ENCODE measurements at regions of chr12 and their contacts with region 1.

Region 1: GRCh38 chr12:13165617-13166041 is 30.9 kb upstream of the EMP1 start:
- DNase-seq: peak; percentile 92
- H3K4me3 Mint-ChIP-seq: no peak overlapping the region
- H3K27ac Mint-ChIP-seq: peak overlapping the region; percentile 52
- H3K4me1 Mint-ChIP-seq: peaks cover 25% of the 10 kb centered on the region
- H3K27me3 Mint-ChIP-seq: peaks cover 5% of the 10 kb centered on the region

Region 2: DNA sequence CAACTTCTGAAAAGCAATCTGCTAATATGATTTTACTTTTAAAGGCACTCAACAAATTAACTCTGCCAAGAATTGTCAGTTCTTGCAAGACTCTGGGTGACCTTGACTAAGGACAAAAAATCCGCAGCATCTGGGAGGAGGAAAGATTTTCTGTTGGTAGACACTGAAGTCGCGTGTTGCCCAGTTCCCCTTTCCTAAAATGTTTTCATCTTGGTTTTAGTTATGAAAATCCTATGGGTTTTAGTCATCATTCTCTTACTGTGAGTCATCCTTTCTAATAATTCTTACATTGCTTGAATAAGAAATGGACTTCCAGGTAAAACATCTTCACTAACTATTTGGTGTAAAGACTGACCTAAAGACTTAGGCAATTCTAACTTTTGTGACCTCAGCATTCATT is 71.3 kb before region 1 on chr12:
- CTCF ChIA-PET with region 1: no interaction called
- POLR2A ChIA-PET with region 1: no interaction called
- intact Hi-C with region 1: no loop called
- DNase-seq: no peak
- H3K4me3 Mint-ChIP-seq: no peak overlapping the region
- H3K27ac Mint-ChIP-seq: no peak overlapping the region
- H3K4me1 Mint-ChIP-seq: peaks cover 30% of the 10 kb centered on the region
- H3K27me3 Mint-ChIP-seq: no peaks in the 10 kb centered on the region

Region 3: DNA sequence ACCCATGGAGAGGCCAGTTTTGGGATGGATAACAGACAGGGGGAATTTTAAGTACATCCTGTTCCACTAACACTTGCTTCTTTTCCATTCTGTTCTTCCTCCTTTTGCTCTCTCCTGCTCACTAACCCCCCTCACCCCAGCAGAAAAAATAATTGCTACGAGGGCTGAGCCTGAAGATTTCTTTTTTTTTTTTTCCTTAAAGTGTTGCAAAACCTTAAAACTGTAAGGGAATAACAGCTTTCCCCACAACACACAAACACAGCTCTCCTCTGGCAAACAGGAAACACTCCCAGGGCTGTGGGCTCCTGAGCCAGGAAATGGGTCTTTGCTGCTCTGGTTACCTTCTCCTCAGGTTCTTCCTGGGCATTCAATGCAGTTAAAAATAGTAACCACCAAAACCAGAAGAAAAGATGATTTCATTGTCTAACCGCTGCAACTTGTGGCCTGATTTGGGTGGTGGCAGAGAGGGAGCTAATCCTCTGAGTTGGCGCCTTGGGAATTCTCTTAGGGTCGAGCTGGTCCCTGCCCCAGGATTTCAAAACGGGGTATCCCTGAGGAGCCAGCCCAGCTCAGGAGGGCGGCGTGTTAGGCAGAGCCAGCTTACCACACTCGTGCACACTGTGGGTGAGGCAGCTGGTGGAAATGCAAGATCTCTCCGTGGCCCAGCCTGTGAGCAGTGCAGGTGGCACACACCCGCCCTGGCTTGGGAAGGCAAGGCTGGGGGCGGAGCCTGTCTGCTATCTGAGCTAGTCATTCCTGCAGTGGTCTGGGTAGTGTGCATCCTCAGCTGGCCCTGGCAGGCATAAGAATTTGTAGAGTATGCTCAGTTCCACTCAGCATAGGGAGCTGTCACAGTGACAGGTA is 13.8 kb after region 1 on chr12:
- CTCF ChIA-PET with region 1: interaction called, 5 read pairs
- POLR2A ChIA-PET with region 1: no interaction called
- intact Hi-C with region 1: loop called (anchors 2 kb)
- DNase-seq: peak; percentile 83
- H3K4me3 Mint-ChIP-seq: peak overlapping the region; percentile 30
- H3K27ac Mint-ChIP-seq: peak overlapping the region; percentile 16
- H3K4me1 Mint-ChIP-seq: peaks cover 16% of the 10 kb centered on the region
- H3K27me3 Mint-ChIP-seq: peaks cover 13% of the 10 kb centered on the region

Region 4: DNA sequence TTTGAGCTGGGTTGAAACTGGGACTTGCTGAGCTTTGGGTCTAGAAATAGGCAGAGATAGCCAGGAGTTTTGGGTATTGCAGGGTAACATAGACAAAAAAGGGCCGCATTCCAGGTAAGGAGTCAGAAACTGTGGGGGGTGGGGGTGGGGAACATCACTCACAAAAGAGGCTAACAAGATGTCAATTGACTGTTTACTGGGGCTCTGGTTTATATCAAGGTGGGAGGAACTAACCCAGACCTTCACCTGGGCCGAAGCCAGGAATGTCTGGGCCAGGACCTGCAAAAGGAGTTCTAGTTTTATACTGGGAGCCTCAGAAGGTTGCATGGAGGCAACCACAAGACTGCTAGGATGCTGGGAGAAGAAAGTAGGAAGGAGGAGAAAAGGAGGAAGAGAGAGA is 185.3 kb after region 1 on chr12:
- CTCF ChIA-PET with region 1: no interaction called
- POLR2A ChIA-PET with region 1: no interaction called
- intact Hi-C with region 1: no loop called
- DNase-seq: no peak
- H3K4me3 Mint-ChIP-seq: no peak overlapping the region
- H3K27ac Mint-ChIP-seq: no peak overlapping the region
- H3K4me1 Mint-ChIP-seq: peaks cover 5% of the 10 kb centered on the region
- H3K27me3 Mint-ChIP-seq: peaks cover 20% of the 10 kb centered on the region

Region 5: GRCh38 chr12:13474381-13474780 is 308.8 kb after region 1 on chr12:
- CTCF ChIA-PET with region 1: no interaction called
- POLR2A ChIA-PET with region 1: no interaction called
- intact Hi-C with region 1: no loop called
- DNase-seq: no peak
- H3K4me3 Mint-ChIP-seq: no peak overlapping the region
- H3K27ac Mint-ChIP-seq: no peak overlapping the region
- H3K4me1 Mint-ChIP-seq: peaks cover 5% of the 10 kb centered on the region
- H3K27me3 Mint-ChIP-seq: peaks cover 6% of the 10 kb centered on the region

Region 6: GRCh38 chr12:14495326-14495725 is 1329.7 kb after region 1 on chr12:
- CTCF ChIA-PET with region 1: no interaction called
- POLR2A ChIA-PET with region 1: no interaction called
- intact Hi-C with region 1: no loop called
- DNase-seq: no peak
- H3K4me3 Mint-ChIP-seq: no peak overlapping the region
- H3K27ac Mint-ChIP-seq: peak overlapping the region; percentile 21
- H3K4me1 Mint-ChIP-seq: peaks cover 7% of the 10 kb centered on the region
- H3K27me3 Mint-ChIP-seq: no peaks in the 10 kb centered on the region

Measured in activated CD4-positive, alpha-beta memory T cell treated with anti-CD3 and anti-CD28 coated beads for 36 hours (primary cell).